Keratinocyte (primary cell): ENCODE measurements at regions of chr12 and their contacts with region 1.

Region 1: DNA sequence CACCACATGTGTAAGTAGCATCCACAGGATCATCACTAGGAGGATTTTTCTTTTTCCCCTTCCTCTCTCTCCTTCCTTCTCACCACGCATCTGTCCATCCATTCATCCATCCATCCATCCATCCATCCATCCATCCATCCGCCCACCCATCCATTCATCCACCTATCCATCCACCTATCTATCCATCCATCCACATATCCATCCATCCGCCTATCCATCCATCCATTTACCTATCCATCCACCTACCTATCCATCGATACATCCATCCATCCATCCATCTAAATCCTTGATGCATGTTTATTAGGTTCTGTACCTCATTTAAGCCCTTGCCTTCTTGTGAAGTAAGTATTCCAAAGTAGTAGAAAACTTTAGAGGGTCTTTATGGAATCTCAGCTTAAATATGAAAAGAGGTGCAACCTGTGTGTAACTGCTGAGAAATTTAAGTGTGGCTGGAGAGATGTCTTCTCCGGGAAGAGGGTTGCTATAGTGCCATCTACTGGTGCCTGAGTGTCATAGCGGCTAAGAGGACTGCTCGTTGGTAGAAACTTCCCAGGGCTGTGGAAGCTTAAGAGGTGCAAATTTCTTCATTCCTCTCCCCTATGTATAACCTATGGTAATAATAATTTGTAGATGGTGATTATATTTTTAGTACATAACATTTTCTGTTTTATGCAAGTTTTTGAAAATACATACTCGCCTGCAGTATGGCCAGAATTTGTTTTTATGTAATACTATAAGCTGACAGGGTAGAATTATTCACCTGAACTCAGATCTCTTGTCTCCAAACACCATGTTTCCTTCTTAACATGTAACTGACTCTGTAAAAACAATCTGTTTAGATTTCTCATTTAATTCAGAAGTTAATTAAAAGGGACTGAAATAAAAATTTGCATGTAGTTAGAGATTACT is 46.0 kb downstream of the MYO1H start:
- DNase-seq: peak; percentile 11
- H3K4me3 ChIP-seq: no peak overlapping the region
- H3K27ac ChIP-seq: no peak overlapping the region
- H3K4me1 ChIP-seq: no peaks in the 10 kb centered on the region
- H3K27me3 ChIP-seq: no peaks in the 10 kb centered on the region
- CTCF ChIP-seq: peak; percentile 88 to 93 (median 90)

Region 2: GRCh38 chr12:109110988-109111495 is 282.6 kb before region 1 on chr12:
- dilution Hi-C with region 1: loop called (anchors 25 kb)
- DNase-seq: no peak
- H3K4me3 ChIP-seq: peak overlapping the region; percentile 42 to 65 (median 53)
- H3K27ac ChIP-seq: peak overlapping the region; percentile 33
- H3K4me1 ChIP-seq: peaks cover 4% of the 10 kb centered on the region
- H3K27me3 ChIP-seq: no peaks in the 10 kb centered on the region
- CTCF ChIP-seq: no peak

Region 3: GRCh38 chr12:109255377-109255776 is 138.3 kb before region 1 on chr12:
- dilution Hi-C with region 1: no loop called
- DNase-seq: no peak
- H3K4me3 ChIP-seq: no peak overlapping the region
- H3K27ac ChIP-seq: no peak overlapping the region
- H3K4me1 ChIP-seq: no peaks in the 10 kb centered on the region
- H3K27me3 ChIP-seq: no peaks in the 10 kb centered on the region
- CTCF ChIP-seq: peak in 1 of 3 experiments; percentile 53

Region 4: DNA sequence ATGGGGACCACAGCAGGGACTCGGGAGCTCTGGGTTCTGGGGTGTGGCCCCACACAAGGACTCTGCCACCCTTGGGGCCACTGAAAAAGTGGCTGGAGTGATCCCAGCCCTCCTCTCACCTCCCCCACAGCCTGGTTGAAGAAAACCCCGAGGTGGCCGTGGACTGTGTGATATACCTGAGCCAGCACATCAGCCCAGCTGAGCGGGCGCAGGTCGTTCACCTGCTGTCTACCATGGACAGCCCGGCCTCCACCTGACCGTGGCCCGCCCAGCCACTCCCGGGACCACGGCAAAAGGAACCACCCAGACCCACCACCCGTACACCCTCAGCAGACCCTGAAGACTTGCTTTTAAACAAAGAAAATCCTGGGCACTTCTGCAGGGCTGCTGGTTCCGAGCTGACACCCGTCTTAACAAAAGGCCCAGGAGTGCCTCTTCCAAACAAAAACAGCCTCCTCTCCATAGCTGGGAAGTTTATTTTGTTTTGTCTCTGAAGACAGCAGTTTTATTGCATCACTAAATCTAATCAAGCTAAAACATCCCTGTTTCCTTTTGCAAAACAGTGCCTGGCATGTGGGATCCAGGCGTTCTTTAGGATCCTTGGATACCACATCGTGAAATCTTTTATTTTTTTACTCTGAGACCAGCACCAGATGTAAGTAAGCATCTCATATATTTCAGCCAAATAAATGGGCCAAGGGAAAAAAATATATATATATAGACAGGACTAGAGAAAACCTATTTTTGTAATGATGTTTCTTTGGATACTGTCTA is 127.4 kb before region 1 on chr12:
- dilution Hi-C with region 1: no loop called
- DNase-seq: no peak
- H3K4me3 ChIP-seq: no peak overlapping the region
- H3K27ac ChIP-seq: no peak overlapping the region
- H3K4me1 ChIP-seq: no peaks in the 10 kb centered on the region
- H3K27me3 ChIP-seq: no peaks in the 10 kb centered on the region
- CTCF ChIP-seq: no peak